Caco-2 (cell line): ENCODE measurements at regions of chr17 and their contacts with region 1.

Region 1: GRCh38 chr17:43766413-43767052 is 7.9 kb upstream of the SOST start:
- DNase-seq: peak in 1 of 2 experiments; percentile 72
- H3K4me3 ChIP-seq: no peak overlapping the region
- H3K4me3 Mint-ChIP-seq: no peak overlapping the region
- H3K27ac Mint-ChIP-seq: no peak overlapping the region
- H3K4me1 ChIP-seq: no peaks in the 10 kb centered on the region
- H3K4me1 Mint-ChIP-seq: no peaks in the 10 kb centered on the region
- H3K27me3 ChIP-seq: no peaks in the 10 kb centered on the region
- H3K27me3 Mint-ChIP-seq: no peaks in the 10 kb centered on the region
- CTCF ChIP-seq: peak; percentile 88 to 90

Region 2: DNA sequence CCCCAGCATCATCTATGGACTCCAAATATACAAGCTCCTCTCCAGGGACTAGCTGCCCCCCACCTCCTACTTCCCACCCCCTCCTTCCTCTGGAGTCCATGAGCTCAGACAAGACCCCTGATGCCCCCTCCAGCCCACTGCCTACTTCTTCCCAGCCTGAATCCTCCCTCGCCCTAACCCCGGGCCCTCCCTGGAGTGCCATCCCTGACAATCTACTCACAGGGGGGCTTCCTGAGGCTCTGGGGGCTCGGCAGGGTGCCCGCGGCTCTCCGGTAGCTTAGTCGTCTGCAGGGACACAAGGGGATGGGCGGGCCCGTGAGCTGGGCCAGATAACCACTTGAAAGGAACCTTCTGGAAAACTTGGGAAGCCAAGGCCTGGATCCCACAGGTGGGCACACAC is 51.3 kb after region 1 on chr17:
- CTCF ChIA-PET with region 1: interaction called, 13 read pairs
- POLR2A ChIA-PET with region 1: no interaction called
- intact Hi-C with region 1: no loop called
- DNase-seq: no peak
- H3K4me3 ChIP-seq: no peak overlapping the region
- H3K4me3 Mint-ChIP-seq: no peak overlapping the region
- H3K27ac Mint-ChIP-seq: no peak overlapping the region
- H3K4me1 ChIP-seq: peaks cover 6% of the 10 kb centered on the region; the same call in 1 of the 2 replicates
- H3K4me1 Mint-ChIP-seq: peaks cover 8% of the 10 kb centered on the region
- H3K27me3 ChIP-seq: no peaks in the 10 kb centered on the region
- H3K27me3 Mint-ChIP-seq: no peaks in the 10 kb centered on the region
- CTCF ChIP-seq: no peak

Region 3: GRCh38 chr17:43966271-43966670 is 199.7 kb after region 1 on chr17:
- CTCF ChIA-PET with region 1: no interaction called
- POLR2A ChIA-PET with region 1: no interaction called
- intact Hi-C with region 1: no loop called
- DNase-seq: no peak
- H3K4me3 ChIP-seq: no peak overlapping the region
- H3K4me3 Mint-ChIP-seq: no peak overlapping the region
- H3K27ac Mint-ChIP-seq: no peak overlapping the region
- H3K4me1 ChIP-seq: no peaks in the 10 kb centered on the region
- H3K4me1 Mint-ChIP-seq: no peaks in the 10 kb centered on the region
- H3K27me3 ChIP-seq: no peaks in the 10 kb centered on the region; the same call in 1 of the 2 replicates
- H3K27me3 Mint-ChIP-seq: peaks cover 18% of the 10 kb centered on the region
- CTCF ChIP-seq: no peak